ENCODE measurements at regions of chr15 and their contacts with region 1.

Region 1: GRCh38 chr15:82540055-82540983 is at the start of gene RPS17:
- DNase-seq: peak; percentile 98
- H3K4me3 ChIP-seq: peak within 1 kb of the TSS; percentile 74 to 84 (median 78)
- H3K27ac ChIP-seq: peak within 1 kb of the TSS; percentile 89 to 92 (median 90)
- H3K4me1 ChIP-seq: peaks cover 4 to 25% (median 18%) of the 10 kb centered on the region in 4 donors
- H3K27me3 ChIP-seq: peaks cover 11% of the 10 kb centered on the region
- CTCF ChIP-seq: peak; percentile 99 to 100 (median 99)
- EP300 ChIP-seq: no peak
- POLR2A ChIP-seq: peak; percentile 92
- total RNA-seq, gene RPS17: 649 to 1,349 (median 1,094) TPM

Region 2: DNA sequence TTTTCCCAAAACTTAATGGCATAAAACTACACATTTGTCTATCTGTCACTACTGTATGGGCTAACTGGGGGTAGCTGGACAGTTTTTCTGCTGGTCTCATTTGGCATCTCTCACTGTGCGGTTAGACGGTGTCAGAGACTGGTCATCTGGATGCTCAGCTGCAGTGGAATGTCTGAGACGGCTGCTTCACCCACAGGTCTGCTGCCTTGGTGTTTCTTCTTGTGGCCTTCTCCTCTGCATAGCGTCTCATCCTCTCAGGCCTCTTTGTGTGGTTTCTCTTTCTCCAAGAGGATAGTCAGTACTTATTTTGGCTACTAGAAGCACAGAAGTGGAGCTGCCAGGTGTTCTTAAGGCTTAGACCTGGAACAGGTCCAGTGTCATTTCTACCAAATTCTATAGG is 146.6 kb before region 1 on chr15:
- in situ Hi-C with region 1: loop called in 1 of 4 experiments (anchors 25 kb)
- intact Hi-C with region 1: no loop called
- DNase-seq: no peak
- H3K4me3 ChIP-seq: no peak overlapping the region
- H3K27ac ChIP-seq: no peak overlapping the region
- H3K4me1 ChIP-seq: no peaks in the 10 kb centered on the region
- H3K27me3 ChIP-seq: no peaks in the 10 kb centered on the region
- CTCF ChIP-seq: no peak
- EP300 ChIP-seq: no peak
- POLR2A ChIP-seq: no peak

Region 3: GRCh38 chr15:83011271-83012075 is 471.2 kb after region 1 on chr15 and contains the start of gene C15orf40:
- in situ Hi-C with region 1: loop called (anchors 25 kb)
- intact Hi-C with region 1: no loop called
- DNase-seq: peak; percentile 92
- H3K4me3 ChIP-seq: peak within 1 kb of the TSS; percentile 71 to 92 (median 86)
- H3K27ac ChIP-seq: peak within 1 kb of the TSS; percentile 82 to 95 (median 92)
- H3K4me1 ChIP-seq: peaks cover 12 to 25% (median 14%) of the 10 kb centered on the region in 4 donors
- H3K27me3 ChIP-seq: no peaks in the 10 kb centered on the region
- CTCF ChIP-seq: peak; percentile 46 to 66 (median 57)
- EP300 ChIP-seq: no peak
- POLR2A ChIP-seq: peak; percentile 82
- total RNA-seq, gene C15orf40: 10.6 to 42.8 (median 18.9) TPM